ENCODE measurements at regions of chr2 and their contacts with region 1.

Region 1: GRCh38 chr2:7672027-7672684 is 754.9 kb downstream of the RNF144A start:
- DNase-seq: peak; percentile 80
- H3K4me3 Mint-ChIP-seq: peak overlapping the region; percentile 20
- H3K27ac Mint-ChIP-seq: peak overlapping the region; percentile 74
- H3K4me1 Mint-ChIP-seq: peaks cover 29% of the 10 kb centered on the region
- H3K27me3 Mint-ChIP-seq: no peaks in the 10 kb centered on the region

Region 2: DNA sequence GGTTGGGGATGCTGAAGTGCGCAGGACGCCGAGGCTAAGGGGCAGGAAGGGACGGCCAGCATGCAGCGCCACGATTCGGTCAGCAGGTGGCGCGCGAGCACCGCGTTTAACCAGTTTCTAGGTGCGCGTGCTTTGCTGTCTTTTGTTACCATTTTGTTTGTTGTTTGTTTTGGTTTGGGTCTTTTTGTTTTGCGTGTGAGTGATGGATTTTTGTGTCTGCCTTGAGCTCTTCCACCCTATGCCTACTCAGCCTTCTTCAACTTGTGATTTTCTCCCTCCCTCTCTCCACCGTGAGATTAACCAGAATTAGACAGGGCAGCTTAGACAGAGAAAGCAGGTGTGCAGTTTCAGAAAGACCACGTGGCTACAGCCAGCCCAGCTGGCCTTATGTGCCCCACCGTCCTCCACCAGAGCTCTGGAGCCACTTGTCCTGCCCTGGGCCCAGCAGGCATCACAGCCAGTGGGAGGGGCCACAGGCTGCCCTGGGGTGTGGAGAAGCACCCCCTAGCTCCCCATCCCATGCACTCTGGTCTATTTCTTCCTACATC is 574.7 kb before region 1 on chr2:
- CTCF ChIA-PET with region 1: interaction called, 6 read pairs
- intact Hi-C with region 1: loop called (anchors 1 kb)
- DNase-seq: peak; percentile 84
- H3K4me3 Mint-ChIP-seq: peak overlapping the region; percentile 58
- H3K27ac Mint-ChIP-seq: no peak overlapping the region
- H3K4me1 Mint-ChIP-seq: peaks cover 7% of the 10 kb centered on the region
- H3K27me3 Mint-ChIP-seq: no peaks in the 10 kb centered on the region

Region 3: DNA sequence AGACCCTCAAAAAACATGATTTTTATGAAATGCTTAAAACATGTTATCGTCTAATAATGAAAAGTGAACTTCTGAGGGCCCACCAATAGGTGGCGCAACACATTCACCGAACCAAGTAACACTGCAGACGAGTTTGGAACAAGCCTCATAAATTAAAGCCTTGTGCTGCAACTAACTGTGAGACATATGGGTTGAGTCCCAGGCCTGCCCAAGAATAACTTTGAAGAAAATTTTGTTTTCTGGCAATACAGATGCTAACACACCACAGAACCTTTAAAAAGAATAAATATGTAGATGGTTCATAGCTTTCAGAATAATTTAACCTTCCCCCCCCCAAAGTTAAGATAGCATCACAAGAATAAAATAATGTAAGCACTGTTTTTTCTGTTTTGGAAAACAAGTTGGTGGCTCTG is 469.1 kb before region 1 on chr2:
- CTCF ChIA-PET with region 1: no interaction called
- intact Hi-C with region 1: loop called (anchors 2 kb)
- DNase-seq: peak; percentile 77
- H3K4me3 Mint-ChIP-seq: no peak overlapping the region
- H3K27ac Mint-ChIP-seq: no peak overlapping the region
- H3K4me1 Mint-ChIP-seq: no peaks in the 10 kb centered on the region
- H3K27me3 Mint-ChIP-seq: no peaks in the 10 kb centered on the region

Region 4: GRCh38 chr2:7427293-7428060 is 244.7 kb before region 1 on chr2:
- CTCF ChIA-PET with region 1: interaction called, 24 read pairs
- intact Hi-C with region 1: loop called (anchors 1 kb)
- DNase-seq: no peak
- H3K4me3 Mint-ChIP-seq: no peak overlapping the region
- H3K27ac Mint-ChIP-seq: no peak overlapping the region
- H3K4me1 Mint-ChIP-seq: peaks cover 31% of the 10 kb centered on the region
- H3K27me3 Mint-ChIP-seq: peaks cover 3% of the 10 kb centered on the region

Region 5: DNA sequence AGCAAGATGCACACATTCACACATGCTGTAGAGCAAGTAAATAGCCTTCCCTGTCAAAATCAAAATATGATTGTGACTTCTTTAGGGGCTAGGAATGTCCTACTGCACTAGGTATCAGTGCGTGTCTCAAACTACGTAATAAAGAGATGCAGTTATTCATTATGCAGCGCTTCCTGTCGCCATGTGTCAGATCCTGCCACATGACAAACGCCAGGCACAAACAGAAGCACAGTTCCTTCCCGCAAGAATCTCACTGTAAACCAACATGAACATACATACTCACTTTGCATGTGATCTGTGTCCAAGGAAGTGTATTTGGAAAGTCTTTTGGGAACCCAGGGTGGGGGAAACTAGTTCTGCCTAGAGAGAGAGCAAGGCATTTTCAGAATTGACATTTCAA is 155.1 kb before region 1 on chr2:
- CTCF ChIA-PET with region 1: no interaction called
- intact Hi-C with region 1: loop called (anchors 2 kb)
- DNase-seq: peak; percentile 61
- H3K4me3 Mint-ChIP-seq: peak overlapping the region; percentile 31
- H3K27ac Mint-ChIP-seq: peak overlapping the region; percentile 77
- H3K4me1 Mint-ChIP-seq: peaks cover 37% of the 10 kb centered on the region
- H3K27me3 Mint-ChIP-seq: no peaks in the 10 kb centered on the region

Region 6: GRCh38 chr2:7646661-7647060 is 25.5 kb before region 1 on chr2:
- CTCF ChIA-PET with region 1: interaction called, 11 read pairs
- intact Hi-C with region 1: no loop called
- DNase-seq: no peak
- H3K4me3 Mint-ChIP-seq: no peak overlapping the region
- H3K27ac Mint-ChIP-seq: no peak overlapping the region
- H3K4me1 Mint-ChIP-seq: peaks cover 24% of the 10 kb centered on the region
- H3K27me3 Mint-ChIP-seq: no peaks in the 10 kb centered on the region